Activated CD4-positive, alpha-beta T cell treated with anti-CD3 and anti-CD28 coated beads, Interleukin-2, amount 10 ng/mL, durations not matched to agents 24 days and 14 days (primary cell): ENCODE measurements at regions of chr6 and their contacts with region 1.

Region 1: GRCh38 chr6:106275692-106276091 is 49.9 kb downstream of the ATG5 start:
- DNase-seq: no peak
- H3K4me3 Mint-ChIP-seq: no peak overlapping the region
- H3K27ac Mint-ChIP-seq: no peak overlapping the region
- H3K4me1 Mint-ChIP-seq: peaks cover 25% of the 10 kb centered on the region
- H3K27me3 Mint-ChIP-seq: no peaks in the 10 kb centered on the region

Region 2: DNA sequence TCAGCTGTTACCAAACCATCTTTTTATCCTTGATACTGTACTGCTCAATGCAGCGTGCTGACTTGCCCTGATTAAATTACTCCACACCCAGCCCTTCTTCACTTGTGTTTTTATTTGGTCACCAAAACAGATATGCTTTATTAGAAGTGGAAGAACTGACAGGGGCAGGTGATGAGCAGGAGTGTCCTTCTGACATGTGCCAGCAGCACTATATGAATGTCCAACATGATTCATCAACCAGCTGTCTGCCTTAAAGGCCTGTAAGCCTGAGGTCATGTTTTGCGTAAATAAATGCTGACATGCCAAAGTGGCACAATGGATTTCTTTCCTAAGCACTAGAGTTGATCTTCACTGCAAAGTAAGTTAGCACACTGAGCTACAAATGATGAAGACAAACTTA is 1111.3 kb before region 1 on chr6:
- intact Hi-C with region 1: no loop called
- DNase-seq: no peak
- H3K4me3 Mint-ChIP-seq: no peak overlapping the region
- H3K27ac Mint-ChIP-seq: no peak overlapping the region
- H3K4me1 Mint-ChIP-seq: no peaks in the 10 kb centered on the region
- H3K27me3 Mint-ChIP-seq: peaks cover 39% of the 10 kb centered on the region

Region 3: DNA sequence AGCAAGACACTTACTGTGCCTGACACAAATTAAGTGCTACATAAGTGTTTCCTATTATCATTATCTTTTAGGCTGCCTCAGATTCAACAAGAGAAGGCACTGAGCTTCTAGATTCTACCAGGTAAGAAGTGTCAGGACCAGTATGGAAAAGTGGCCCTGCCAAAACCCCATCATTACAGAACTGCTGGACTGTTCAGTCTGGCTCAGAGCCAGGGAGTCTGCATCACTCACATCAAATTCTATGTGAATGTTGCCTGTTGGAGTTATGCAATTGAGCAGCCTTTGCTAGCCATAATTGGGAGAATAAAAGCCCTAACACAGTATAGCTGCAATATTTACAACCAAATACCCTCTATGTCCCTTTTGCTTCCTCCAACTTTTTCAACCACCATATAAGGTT is 21.1 kb before region 1 on chr6:
- intact Hi-C with region 1: no loop called
- DNase-seq: no peak
- H3K4me3 Mint-ChIP-seq: no peak overlapping the region
- H3K27ac Mint-ChIP-seq: no peak overlapping the region
- H3K4me1 Mint-ChIP-seq: peaks cover 7% of the 10 kb centered on the region
- H3K27me3 Mint-ChIP-seq: no peaks in the 10 kb centered on the region

Region 4: GRCh38 chr6:106309766-106310373 is 34.2 kb after region 1 on chr6:
- intact Hi-C with region 1: loop called (anchors 5 kb)
- DNase-seq: no peak
- H3K4me3 Mint-ChIP-seq: no peak overlapping the region
- H3K27ac Mint-ChIP-seq: no peak overlapping the region
- H3K4me1 Mint-ChIP-seq: peaks cover 32% of the 10 kb centered on the region
- H3K27me3 Mint-ChIP-seq: no peaks in the 10 kb centered on the region

Region 5: DNA sequence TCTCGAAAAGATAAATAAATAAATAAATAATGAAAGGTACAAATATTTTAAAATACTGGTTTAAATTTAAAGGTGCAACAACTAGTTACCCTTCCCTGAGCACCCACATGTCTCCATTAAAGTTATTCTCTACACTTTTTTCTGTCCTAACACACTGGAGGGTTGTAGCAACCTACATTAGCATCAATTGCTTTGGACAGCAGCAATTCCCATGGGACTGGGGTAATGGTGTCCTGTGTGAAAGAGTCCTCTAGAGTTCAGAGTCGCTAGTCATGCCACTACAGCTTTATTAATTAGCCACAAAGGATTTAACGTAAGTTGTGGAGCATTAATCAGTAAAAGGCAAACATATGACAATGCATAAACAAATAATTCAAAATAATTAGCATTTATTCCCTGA is 713.0 kb after region 1 on chr6:
- intact Hi-C with region 1: no loop called
- DNase-seq: no peak
- H3K4me3 Mint-ChIP-seq: no peak overlapping the region
- H3K27ac Mint-ChIP-seq: no peak overlapping the region
- H3K4me1 Mint-ChIP-seq: no peaks in the 10 kb centered on the region
- H3K27me3 Mint-ChIP-seq: peaks cover 7% of the 10 kb centered on the region